ENCODE measurements at regions of chr13 and their contacts with region 1.

Region 1: GRCh38 chr13:51148952-51149573 is 38.0 kb upstream of the C13orf42 start:
- DNase-seq: no peak
- ATAC-seq: peak; percentile 75
- H3K4me3 ChIP-seq: no peak overlapping the region
- H3K27ac ChIP-seq: no peak overlapping the region
- H3K4me1 ChIP-seq: no peaks in the 10 kb centered on the region
- H3K27me3 ChIP-seq: peaks cover 10% of the 10 kb centered on the region; the same call in 1 of the 2 replicates
- CTCF ChIP-seq: peak; percentile 76

Region 2: DNA sequence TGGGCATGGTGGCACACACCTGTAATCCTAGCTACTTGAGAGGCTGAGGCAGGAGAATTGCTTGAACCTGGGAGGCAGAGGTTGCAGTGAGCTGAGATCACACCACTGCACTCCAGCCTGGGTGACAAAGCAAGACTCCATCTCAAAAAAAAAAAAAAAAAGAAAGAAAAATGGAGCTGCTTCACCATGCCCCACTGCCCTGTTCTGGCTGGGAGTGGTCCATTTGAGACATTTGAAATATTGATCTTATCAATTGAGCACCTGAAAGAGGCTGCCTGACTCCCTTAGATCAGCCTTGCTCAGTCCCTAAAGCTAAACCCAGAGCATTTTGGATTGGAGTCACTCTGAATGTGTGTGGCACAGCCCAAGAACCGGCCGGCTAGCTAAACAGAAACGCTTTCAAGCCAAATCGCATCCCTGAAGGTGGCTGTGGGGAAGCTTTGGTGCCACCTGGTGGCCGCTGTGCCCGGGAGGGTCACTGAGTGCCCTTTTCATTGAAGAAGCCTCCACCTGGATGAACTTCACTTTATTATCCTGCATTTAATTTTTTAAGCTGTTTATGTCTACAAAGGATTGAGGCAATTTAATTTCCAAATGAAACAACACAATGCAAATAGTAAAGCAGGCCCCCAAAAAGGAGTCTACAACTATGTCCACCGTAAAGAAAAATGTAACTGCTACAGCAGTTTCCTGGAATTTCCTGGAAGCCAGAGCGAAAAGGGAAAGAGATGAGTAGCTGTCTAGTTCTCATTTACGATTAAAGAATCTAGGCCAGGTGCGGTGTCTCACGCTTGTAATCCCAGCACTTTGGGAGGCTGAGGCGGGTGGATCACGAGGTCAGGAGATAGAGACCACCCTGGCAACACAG is 137.3 kb after region 1 on chr13:
- CTCF ChIA-PET with region 1: interaction called, 35 read pairs
- POLR2A ChIA-PET with region 1: no interaction called
- in situ Hi-C with region 1: no loop called
- intact Hi-C with region 1: loop called (anchors 2 kb)
- DNase-seq: peak; percentile 47
- ATAC-seq: peak; percentile 97
- H3K4me3 ChIP-seq: no peak overlapping the region
- H3K27ac ChIP-seq: no peak overlapping the region
- H3K4me1 ChIP-seq: no peaks in the 10 kb centered on the region
- H3K27me3 ChIP-seq: no peaks in the 10 kb centered on the region
- CTCF ChIP-seq: peak; percentile 90

Region 3: GRCh38 chr13:51357928-51358595 is 209.0 kb after region 1 on chr13:
- CTCF ChIA-PET with region 1: no interaction called
- POLR2A ChIA-PET with region 1: interaction called, 11 read pairs
- in situ Hi-C with region 1: no loop called
- intact Hi-C with region 1: no loop called
- DNase-seq: no peak
- ATAC-seq: no peak
- H3K4me3 ChIP-seq: no peak overlapping the region
- H3K27ac ChIP-seq: no peak overlapping the region
- H3K4me1 ChIP-seq: no peaks in the 10 kb centered on the region
- H3K27me3 ChIP-seq: no peaks in the 10 kb centered on the region
- CTCF ChIP-seq: no peak

Region 4: DNA sequence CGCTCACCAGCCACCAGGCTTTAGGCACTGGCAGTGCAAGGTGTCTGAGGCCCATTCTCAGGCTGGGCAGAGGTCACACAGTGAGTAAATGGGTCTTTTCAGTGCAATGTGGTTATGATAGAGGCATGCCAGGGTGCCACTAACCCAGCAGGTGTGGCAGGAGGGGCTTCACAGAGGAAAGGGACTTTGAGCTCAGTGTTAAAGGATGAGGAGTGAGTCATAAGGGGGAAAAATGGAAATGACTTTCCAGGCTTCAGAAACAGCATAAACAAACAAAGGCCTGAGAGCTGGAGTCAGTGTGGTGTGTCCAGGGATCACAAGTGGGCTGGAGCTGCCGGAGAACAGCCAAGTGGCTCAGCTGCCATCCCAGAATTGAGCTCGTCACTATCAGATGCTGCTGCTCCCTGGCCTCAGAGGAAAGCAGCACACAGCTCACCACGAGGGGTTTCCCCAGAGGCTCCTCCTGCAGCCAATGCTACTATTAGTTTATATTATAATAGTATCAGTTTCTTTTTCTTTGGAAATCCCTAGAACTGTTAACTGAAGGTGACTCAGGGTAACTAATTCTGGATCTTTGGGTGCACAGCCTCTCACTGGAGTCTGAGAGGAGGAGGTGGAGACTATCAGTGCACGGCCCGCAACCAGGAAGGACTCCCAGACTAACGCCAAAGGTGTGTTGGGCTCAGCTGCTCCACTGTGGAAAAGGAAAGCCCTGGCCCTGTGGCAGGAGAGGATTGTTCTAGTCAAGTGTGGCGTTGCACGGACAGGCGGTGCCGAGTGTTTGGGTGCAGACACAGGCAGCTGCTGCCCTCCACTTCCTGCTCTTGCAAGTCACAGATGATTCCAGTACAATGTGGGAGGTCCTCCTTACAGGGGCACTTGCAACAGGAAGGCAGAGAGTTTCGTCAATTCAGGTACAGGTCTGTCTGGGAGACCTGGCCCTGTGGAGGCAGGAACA is 615.4 kb after region 1 on chr13:
- CTCF ChIA-PET with region 1: no interaction called
- POLR2A ChIA-PET with region 1: no interaction called
- in situ Hi-C with region 1: no loop called
- intact Hi-C with region 1: loop called (anchors 10 kb)
- DNase-seq: no peak
- ATAC-seq: no peak
- H3K4me3 ChIP-seq: no peak overlapping the region
- H3K27ac ChIP-seq: no peak overlapping the region
- H3K4me1 ChIP-seq: no peaks in the 10 kb centered on the region
- H3K27me3 ChIP-seq: no peaks in the 10 kb centered on the region
- CTCF ChIP-seq: no peak